MCF 10A (cell line): ENCODE measurements at regions of chr10 and their contacts with region 1.

Region 1: GRCh38 chr10:43390759-43391158 is 18.2 kb downstream of the HNRNPF start:
- DNase-seq: peak; percentile 61
- H3K4me3 Mint-ChIP-seq: no peak overlapping the region
- H3K27ac Mint-ChIP-seq: no peak overlapping the region
- H3K4me1 Mint-ChIP-seq: peaks cover 28% of the 10 kb centered on the region
- H3K27me3 Mint-ChIP-seq: no peaks in the 10 kb centered on the region
- CTCF ChIP-seq: peak; percentile 55

Region 2: DNA sequence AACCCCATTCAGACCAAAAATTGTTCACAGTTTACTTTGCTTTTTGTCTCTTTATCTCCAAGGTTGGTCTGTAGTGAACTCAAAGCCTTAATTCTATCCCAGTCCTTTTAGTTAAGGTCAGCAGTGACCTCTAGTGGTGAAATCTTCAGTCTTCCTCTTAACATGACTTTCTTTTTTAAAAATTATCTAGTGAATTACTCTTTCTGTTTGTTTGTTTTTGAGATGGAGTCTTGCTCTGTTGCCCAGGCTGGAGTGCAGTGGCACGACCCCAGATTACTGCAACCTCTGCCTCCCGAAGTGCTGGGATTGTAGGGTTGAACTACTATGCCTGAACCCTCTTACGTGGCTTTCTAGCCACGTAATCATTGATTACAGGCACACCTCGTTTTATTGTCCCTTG is 71.2 kb after region 1 on chr10:
- CTCF ChIA-PET with region 1: interaction called, 20 read pairs
- POLR2A ChIA-PET with region 1: interaction called, 7 read pairs
- intact Hi-C with region 1: no loop called
- DNase-seq: peak; percentile 83
- H3K4me3 Mint-ChIP-seq: no peak overlapping the region
- H3K27ac Mint-ChIP-seq: no peak overlapping the region
- H3K4me1 Mint-ChIP-seq: no peaks in the 10 kb centered on the region
- H3K27me3 Mint-ChIP-seq: no peaks in the 10 kb centered on the region
- CTCF ChIP-seq: peak; percentile 76